ENCODE measurements at regions of chr7 and their contacts with region 1.

Region 1: GRCh38 chr7:151876899-151877777 is at the start of gene PRKAG2:
- DNase-seq: peak; percentile 58 to 81 (median 76)
- ATAC-seq: peak; percentile 65
- H3K4me3 ChIP-seq: peak within 1 kb of the TSS; percentile 99
- H3K4me3 Mint-ChIP-seq: peak within 1 kb of the TSS; percentile 93 to 98 (median 96)
- H3K27ac ChIP-seq: peak within 1 kb of the TSS; percentile 87
- H3K27ac Mint-ChIP-seq: peak within 1 kb of the TSS; percentile 84 to 96 (median 91)
- H3K4me1 ChIP-seq: peaks cover 7 to 15% of the 10 kb centered on the region in 2 donors
- H3K4me1 Mint-ChIP-seq: peaks cover 6 to 33% (median 20%) of the 10 kb centered on the region in 7 donors
- H3K27me3 ChIP-seq: no peaks in the 10 kb centered on the region
- H3K27me3 Mint-ChIP-seq: peaks cover 0 to 41% (median 0%) of the 10 kb centered on the region in 5 donors
- total RNA-seq, gene PRKAG2: 15.0 to 74.4 (median 66.1) TPM

Region 2: DNA sequence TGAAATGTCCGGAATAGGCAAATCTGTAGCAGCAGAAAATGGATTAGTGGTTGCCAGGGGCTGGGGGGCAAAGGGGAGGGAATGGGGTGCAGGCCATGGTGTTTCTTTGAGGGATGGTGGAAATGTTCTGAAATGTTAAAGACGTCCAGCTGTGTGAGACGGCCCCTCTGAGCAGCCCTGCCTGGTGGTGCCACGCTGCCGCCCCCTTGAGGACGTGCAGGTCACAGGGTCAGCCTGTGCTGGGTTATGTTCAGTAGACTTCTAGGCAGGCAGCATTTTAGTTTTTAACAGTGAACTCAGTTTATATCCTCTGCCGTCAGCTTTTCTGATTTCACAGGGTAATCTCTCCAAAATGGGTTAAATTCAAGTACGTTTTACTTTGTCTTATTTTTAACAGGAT is 526.1 kb before region 1 on chr7:
- CTCF ChIA-PET with region 1: no interaction called
- POLR2A ChIA-PET with region 1: no interaction called
- intact Hi-C with region 1: loop called in 1 of 2 experiments (anchors 1 kb)
- DNase-seq: peak in 2 of 9 donors; percentile 7 to 45
- ATAC-seq: no peak
- H3K4me3 ChIP-seq: no peak overlapping the region
- H3K4me3 Mint-ChIP-seq: peak overlapping the region; percentile 56 to 86 (median 72)
- H3K27ac ChIP-seq: peak overlapping the region; percentile 89
- H3K27ac Mint-ChIP-seq: peak overlapping the region; percentile 74 to 100 (median 93)
- H3K4me1 ChIP-seq: peaks cover 28 to 35% of the 10 kb centered on the region in 2 donors
- H3K4me1 Mint-ChIP-seq: peaks cover 19 to 74% (median 69%) of the 10 kb centered on the region in 7 donors
- H3K27me3 ChIP-seq: no peaks in the 10 kb centered on the region
- H3K27me3 Mint-ChIP-seq: no peaks in the 10 kb centered on the region

Region 3: GRCh38 chr7:151782598-151783448 is 94.3 kb before region 1 on chr7:
- CTCF ChIA-PET with region 1: no interaction called
- POLR2A ChIA-PET with region 1: interaction called, 3 read pairs
- intact Hi-C with region 1: loop called (anchors 1 to 2 kb)
- DNase-seq: peak; percentile 33 to 73 (median 56)
- ATAC-seq: peak; percentile 91
- H3K4me3 ChIP-seq: peak overlapping the region; percentile 57
- H3K4me3 Mint-ChIP-seq: peak overlapping the region; percentile 77 to 95 (median 88)
- H3K27ac ChIP-seq: peak overlapping the region; percentile 53
- H3K27ac Mint-ChIP-seq: peak overlapping the region in 8 of 9 donors; percentile 46 to 93 (median 82)
- H3K4me1 ChIP-seq: peaks cover 0 to 5% of the 10 kb centered on the region in 2 donors
- H3K4me1 Mint-ChIP-seq: peaks cover 10 to 25% (median 16%) of the 10 kb centered on the region in 7 donors
- H3K27me3 ChIP-seq: no peaks in the 10 kb centered on the region
- H3K27me3 Mint-ChIP-seq: peaks cover 0 to 2% (median 0%) of the 10 kb centered on the region in 5 donors

Region 4: DNA sequence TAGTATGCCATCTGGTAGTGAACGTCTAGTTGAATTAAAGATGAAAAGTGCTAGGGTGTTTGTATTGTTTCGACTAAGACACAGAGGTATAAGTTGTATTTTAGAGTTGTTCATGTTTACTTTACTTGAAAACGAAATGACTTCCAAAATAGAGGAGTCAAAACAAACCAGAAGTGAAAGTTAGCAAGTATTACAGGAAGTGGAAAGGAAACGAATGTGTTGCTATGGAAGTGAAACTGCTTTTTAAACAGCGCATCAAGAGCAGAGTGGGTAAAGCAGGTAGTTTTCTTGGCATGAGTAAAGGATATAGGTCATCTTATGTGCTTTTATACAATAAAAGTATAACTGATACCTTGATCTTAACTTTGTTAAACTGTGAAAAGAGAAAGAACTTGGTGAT is 59.1 kb after region 1 on chr7:
- CTCF ChIA-PET with region 1: no interaction called
- POLR2A ChIA-PET with region 1: interaction called, 36 read pairs
- intact Hi-C with region 1: loop called (anchors 1 to 2 kb)
- DNase-seq: peak in 7 of 9 donors; percentile 43 to 78 (median 67)
- ATAC-seq: peak; percentile 83
- H3K4me3 ChIP-seq: peak overlapping the region; percentile 39
- H3K4me3 Mint-ChIP-seq: peak overlapping the region; percentile 67 to 91 (median 80)
- H3K27ac ChIP-seq: peak overlapping the region; percentile 68
- H3K27ac Mint-ChIP-seq: peak overlapping the region; percentile 91 to 99 (median 97)
- H3K4me1 ChIP-seq: peaks cover 8% of the 10 kb centered on the region in 2 donors
- H3K4me1 Mint-ChIP-seq: peaks cover 17 to 40% (median 26%) of the 10 kb centered on the region in 7 donors
- H3K27me3 ChIP-seq: no peaks in the 10 kb centered on the region
- H3K27me3 Mint-ChIP-seq: peaks cover 0 to 27% (median 0%) of the 10 kb centered on the region in 5 donors

Region 5: DNA sequence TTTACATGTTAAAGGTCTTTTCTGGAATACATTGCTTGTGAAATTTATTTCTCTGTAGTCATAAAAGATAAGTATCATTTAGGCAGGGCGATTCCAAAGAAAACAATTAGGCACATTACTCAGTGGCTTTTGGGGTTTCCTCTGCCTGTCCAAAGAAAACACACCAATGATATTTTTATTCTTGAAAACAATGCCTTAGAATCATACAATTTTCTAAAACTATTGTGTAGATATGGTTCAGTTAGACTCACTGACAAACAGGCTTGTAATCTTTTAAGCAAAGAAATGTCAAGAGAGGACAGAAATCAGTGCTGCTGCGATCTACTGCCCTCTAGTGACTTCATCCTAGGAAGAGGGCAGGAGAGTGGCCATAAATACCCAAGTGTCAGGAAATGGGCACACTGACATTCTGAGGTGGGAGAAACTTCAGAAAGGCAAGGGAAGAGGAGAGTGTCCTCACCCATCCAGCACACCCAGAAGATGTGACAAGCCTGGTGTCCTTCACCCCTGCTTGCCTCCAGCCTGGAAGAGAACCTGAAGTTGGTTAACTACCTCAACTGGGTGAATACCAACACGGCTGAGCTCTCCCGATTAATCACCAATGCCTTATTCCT is 268.8 kb after region 1 on chr7:
- CTCF ChIA-PET with region 1: interaction called, 3 read pairs
- POLR2A ChIA-PET with region 1: interaction called, 6 read pairs
- intact Hi-C with region 1: loop called (anchors 2 to 10 kb)
- DNase-seq: peak in 7 of 9 donors; percentile 30 to 60 (median 54)
- ATAC-seq: peak; percentile 63
- H3K4me3 ChIP-seq: no peak overlapping the region
- H3K4me3 Mint-ChIP-seq: peak overlapping the region; percentile 17 to 77 (median 68)
- H3K27ac ChIP-seq: peak overlapping the region; percentile 69
- H3K27ac Mint-ChIP-seq: peak overlapping the region; percentile 88 to 97 (median 93)
- H3K4me1 ChIP-seq: peaks cover 25 to 43% of the 10 kb centered on the region in 2 donors
- H3K4me1 Mint-ChIP-seq: peaks cover 36 to 51% (median 49%) of the 10 kb centered on the region in 7 donors
- H3K27me3 ChIP-seq: no peaks in the 10 kb centered on the region
- H3K27me3 Mint-ChIP-seq: no peaks in the 10 kb centered on the region